ENCODE measurements at regions of chr14 and their contacts with region 1.

Region 1: GRCh38 chr14:69600304-69600891 is 11.0 kb upstream of the SUSD6 start:
- DNase-seq: no peak
- H3K4me3 Mint-ChIP-seq: no peak overlapping the region
- H3K27ac Mint-ChIP-seq: no peak overlapping the region
- H3K4me1 Mint-ChIP-seq: peaks cover 2% of the 10 kb centered on the region
- H3K27me3 Mint-ChIP-seq: peaks cover 9% of the 10 kb centered on the region

Region 2: GRCh38 chr14:69586404-69586803 is 14.0 kb before region 1 on chr14:
- CTCF ChIA-PET with region 1: interaction called, 10 read pairs
- DNase-seq: no peak
- H3K4me3 Mint-ChIP-seq: no peak overlapping the region
- H3K27ac Mint-ChIP-seq: no peak overlapping the region
- H3K4me1 Mint-ChIP-seq: no peaks in the 10 kb centered on the region
- H3K27me3 Mint-ChIP-seq: peaks cover 26% of the 10 kb centered on the region